Activated T-helper 2 cell treated with anti-CD3 and anti-CD28 coated beads, Interferon-gamma antibody, Interleukin-2, Interleukin-4, amounts not matched to agents 10 μg/mL and 5 μg/mL and 100 μg/mL, durations not matched to agents 14 hours and 24 hours and 36 hours (primary cell): ENCODE measurements at regions of chr6 and their contacts with region 1.

Region 1: GRCh38 chr6:30742316-30743098 is at the start of gene FLOT1:
- DNase-seq: peak; percentile 88
- H3K4me3 Mint-ChIP-seq: peak within 1 kb of the TSS; percentile 99
- H3K27ac Mint-ChIP-seq: peak within 1 kb of the TSS; percentile 91
- H3K4me1 Mint-ChIP-seq: peaks cover 50% of the 10 kb centered on the region
- H3K27me3 Mint-ChIP-seq: no peaks in the 10 kb centered on the region
- total RNA-seq, gene FLOT1: 201 and 214 TPM in 2 replicates

Region 2: GRCh38 chr6:29927275-29927569 is 815.3 kb before region 1 on chr6:
- intact Hi-C with region 1: no loop called
- DNase-seq: no peak
- H3K4me3 Mint-ChIP-seq: peak overlapping the region; percentile 85
- H3K27ac Mint-ChIP-seq: peak overlapping the region; percentile 90
- H3K4me1 Mint-ChIP-seq: peaks cover 27% of the 10 kb centered on the region
- H3K27me3 Mint-ChIP-seq: no peaks in the 10 kb centered on the region

Region 3: GRCh38 chr6:30672445-30673253 is 69.9 kb before region 1 on chr6 and contains the start of gene DHX16:
- intact Hi-C with region 1: no loop called
- DNase-seq: peak; percentile 87
- H3K4me3 Mint-ChIP-seq: peak within 1 kb of the TSS; percentile 91
- H3K27ac Mint-ChIP-seq: peak within 1 kb of the TSS; percentile 68
- H3K4me1 Mint-ChIP-seq: peaks cover 20% of the 10 kb centered on the region
- H3K27me3 Mint-ChIP-seq: no peaks in the 10 kb centered on the region
- total RNA-seq, gene DHX16: 48.4 and 48.5 TPM in 2 replicates

Region 4: DNA sequence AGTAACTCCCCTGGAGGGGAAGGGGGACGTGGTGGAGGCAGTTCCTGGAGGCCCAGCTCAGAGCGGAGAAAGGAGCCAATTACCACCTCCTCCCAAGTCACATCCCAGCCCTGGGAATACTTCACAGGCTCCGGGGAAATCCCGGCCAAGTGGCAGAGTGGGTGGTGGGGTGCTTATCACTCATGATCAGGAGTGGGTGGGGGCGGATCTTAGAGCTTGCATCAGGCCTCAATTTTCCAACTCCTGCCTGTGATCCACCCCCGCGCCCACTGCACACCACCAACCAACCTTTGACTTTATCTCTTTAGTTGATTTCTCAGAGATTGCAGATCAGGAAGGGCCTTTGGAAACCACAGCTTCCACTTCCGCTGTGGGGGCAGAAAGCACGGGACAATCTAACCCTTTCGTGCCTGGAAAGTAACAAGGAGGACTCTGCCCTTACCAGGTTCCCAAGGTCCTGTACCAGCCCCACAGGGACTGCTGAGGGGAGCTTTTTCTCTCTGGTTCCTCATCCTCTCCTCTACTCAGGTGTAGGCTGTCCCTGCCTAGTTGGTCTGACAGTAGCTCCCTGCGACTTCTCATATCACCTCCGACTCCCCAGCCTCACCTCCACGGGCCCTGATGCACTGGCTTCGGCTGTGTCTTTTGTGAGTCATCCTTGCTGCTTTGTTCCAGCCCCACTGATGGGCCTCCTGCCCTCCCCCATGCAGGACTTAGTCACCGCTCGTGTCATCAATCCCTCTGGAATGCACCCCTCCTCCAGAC is 26.8 kb after region 1 on chr6:
- intact Hi-C with region 1: loop called (anchors 1 kb)
- DNase-seq: peak; percentile 68
- H3K4me3 Mint-ChIP-seq: peak overlapping the region; percentile 66
- H3K27ac Mint-ChIP-seq: peak overlapping the region; percentile 98
- H3K4me1 Mint-ChIP-seq: peaks cover 68% of the 10 kb centered on the region
- H3K27me3 Mint-ChIP-seq: no peaks in the 10 kb centered on the region

Region 5: DNA sequence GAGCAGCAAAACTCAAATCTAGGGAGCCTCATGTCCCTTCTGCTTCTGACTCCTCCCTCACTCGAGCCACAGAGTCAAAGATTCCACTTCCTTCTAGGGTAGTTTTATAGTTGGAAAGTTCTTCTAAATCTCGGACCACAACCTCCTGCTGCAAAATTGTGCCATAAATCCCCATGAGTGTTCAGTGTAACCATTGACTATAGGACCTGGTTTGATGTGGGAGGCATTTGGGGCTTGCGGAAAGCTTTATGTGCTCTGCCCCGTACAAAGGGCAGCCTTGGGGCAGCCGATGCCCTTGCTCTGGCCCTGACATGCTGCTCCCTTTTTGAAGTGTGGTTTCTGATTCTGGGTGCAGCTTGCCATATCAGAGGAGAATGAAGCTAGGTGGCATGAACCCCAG is 45.4 kb after region 1 on chr6:
- intact Hi-C with region 1: loop called (anchors 1 kb)
- DNase-seq: peak; percentile 31
- H3K4me3 Mint-ChIP-seq: peak overlapping the region; percentile 66
- H3K27ac Mint-ChIP-seq: peak overlapping the region; percentile 96
- H3K4me1 Mint-ChIP-seq: peaks cover 57% of the 10 kb centered on the region
- H3K27me3 Mint-ChIP-seq: no peaks in the 10 kb centered on the region

Region 6: DNA sequence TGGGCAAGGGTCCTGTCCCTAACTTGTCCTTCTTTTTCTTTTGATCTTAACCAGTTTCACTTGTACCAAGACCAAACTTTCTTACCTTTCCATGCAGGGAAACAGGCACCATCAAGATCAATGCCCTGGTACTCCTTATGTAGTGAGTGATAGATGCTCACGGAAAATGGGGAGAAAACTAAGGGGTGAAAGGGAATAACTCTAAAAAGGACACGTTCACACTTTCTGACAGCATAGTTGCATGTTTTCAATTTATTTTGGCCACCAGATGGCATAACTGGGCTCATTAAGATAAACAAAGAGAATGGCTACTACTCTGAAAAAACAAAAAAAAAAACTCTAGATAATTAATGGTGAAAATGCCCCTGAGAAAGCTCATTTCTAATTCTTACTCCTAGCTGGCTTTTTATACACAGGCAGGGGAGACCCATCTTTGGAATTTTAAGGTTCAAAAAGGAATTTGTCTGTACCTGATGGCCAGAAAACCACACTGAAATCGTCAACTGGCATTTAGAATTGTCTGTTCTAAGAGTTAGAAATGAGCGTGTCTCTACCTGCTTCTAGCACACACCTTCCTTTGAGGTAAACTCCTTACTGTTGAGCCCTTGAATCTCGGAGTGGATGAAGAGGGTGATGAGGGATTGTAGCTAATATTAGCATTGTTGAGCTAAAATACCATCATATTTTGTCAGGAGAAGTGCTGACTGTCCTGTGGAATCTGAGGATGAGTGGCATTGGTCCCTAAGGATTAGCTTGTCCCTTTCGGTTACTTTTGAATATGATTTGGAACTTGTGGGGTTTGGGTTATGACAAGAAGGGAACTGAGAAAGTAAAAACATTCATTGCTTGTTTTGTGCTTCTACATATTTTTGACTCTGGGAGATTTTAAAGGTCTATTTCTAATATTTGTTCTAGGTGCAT is 79.6 kb after region 1 on chr6:
- intact Hi-C with region 1: loop called (anchors 1 kb)
- DNase-seq: no peak
- H3K4me3 Mint-ChIP-seq: no peak overlapping the region
- H3K27ac Mint-ChIP-seq: no peak overlapping the region
- H3K4me1 Mint-ChIP-seq: peaks cover 55% of the 10 kb centered on the region
- H3K27me3 Mint-ChIP-seq: no peaks in the 10 kb centered on the region